Ovary (tissue), 10 donors: ENCODE measurements at regions of chr9 and their contacts with region 1.

Region 1: DNA sequence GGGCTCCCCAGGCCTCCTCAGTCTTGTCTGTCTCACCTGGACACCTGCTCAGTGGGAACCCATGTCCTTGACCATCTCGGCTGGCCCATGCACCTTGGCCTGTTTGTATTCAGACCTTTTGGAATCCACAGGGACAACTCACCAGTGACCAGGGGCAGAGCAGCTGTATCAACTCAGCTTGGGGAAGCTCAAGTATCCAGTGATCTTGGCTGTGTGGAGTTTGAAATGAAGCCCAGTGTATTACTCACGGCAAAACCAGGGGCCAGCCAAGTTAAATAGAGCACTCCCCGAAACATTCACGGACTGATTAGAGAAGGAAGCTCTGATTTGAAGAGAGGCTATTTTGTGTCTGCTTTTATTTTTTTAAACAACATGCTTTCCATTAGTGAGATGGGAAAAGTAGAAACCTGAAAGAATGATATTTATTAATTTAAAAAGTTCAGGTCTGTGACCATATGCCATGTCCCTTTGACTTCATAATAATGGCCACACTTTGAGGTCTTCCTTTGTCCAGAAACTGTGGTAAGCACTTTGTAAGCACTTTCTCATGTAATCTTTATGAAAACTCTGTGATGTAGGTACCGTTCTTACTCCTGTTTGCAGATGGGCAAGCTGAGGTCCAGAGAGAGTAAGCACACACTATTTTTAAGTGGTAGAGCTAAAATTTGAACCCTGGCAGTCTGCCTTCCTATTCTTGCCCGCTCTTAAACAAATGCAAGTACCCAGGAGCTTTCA is 656.5 kb downstream of the BNC2 start:
- DNase-seq: peak; percentile 77 to 90 (median 78)
- H3K4me3 ChIP-seq: no peak overlapping the region
- H3K27ac ChIP-seq: peak overlapping the region; percentile 42 to 71
- H3K4me1 ChIP-seq: peaks cover 17% of the 10 kb centered on the region
- H3K27me3 ChIP-seq: no peaks in the 10 kb centered on the region
- CTCF ChIP-seq: no peak
- EP300 ChIP-seq: no peak
- POLR2A ChIP-seq: no peak

Region 2: GRCh38 chr9:15961217-15961616 is 252.7 kb before region 1 on chr9:
- intact Hi-C with region 1: no loop called
- DNase-seq: no peak
- H3K4me3 ChIP-seq: no peak overlapping the region
- H3K27ac ChIP-seq: no peak overlapping the region
- H3K4me1 ChIP-seq: no peaks in the 10 kb centered on the region
- H3K27me3 ChIP-seq: no peaks in the 10 kb centered on the region
- CTCF ChIP-seq: no peak
- EP300 ChIP-seq: no peak
- POLR2A ChIP-seq: no peak

Region 3: DNA sequence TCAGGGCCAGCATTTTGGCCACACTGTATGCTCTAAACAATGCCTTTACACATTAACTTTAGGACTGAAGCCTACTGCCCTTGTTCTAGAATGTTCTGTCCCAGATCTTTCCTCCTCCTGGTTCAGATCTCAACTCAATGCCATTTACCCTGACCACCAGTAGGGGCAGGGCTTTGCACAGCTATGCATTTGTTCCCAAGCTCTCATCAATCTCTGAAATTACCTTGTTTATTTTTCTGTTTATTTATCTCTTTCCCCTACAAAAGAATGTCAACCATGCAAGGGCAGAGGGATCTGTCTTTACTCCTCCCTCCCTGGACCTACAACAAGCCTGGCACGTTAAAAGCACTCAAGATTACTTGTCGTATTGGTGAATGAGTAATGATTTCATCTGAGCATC is 43.7 kb after region 1 on chr9:
- intact Hi-C with region 1: loop called in 2 of 4 experiments (anchors 5 kb)
- DNase-seq: no peak
- H3K4me3 ChIP-seq: no peak overlapping the region
- H3K27ac ChIP-seq: peak overlapping the region in 1 of 2 donors; percentile 17
- H3K4me1 ChIP-seq: peaks cover 15% of the 10 kb centered on the region
- H3K27me3 ChIP-seq: no peaks in the 10 kb centered on the region
- CTCF ChIP-seq: peak in 2 of 3 donors; percentile 19 to 24
- EP300 ChIP-seq: no peak
- POLR2A ChIP-seq: no peak

Region 4: DNA sequence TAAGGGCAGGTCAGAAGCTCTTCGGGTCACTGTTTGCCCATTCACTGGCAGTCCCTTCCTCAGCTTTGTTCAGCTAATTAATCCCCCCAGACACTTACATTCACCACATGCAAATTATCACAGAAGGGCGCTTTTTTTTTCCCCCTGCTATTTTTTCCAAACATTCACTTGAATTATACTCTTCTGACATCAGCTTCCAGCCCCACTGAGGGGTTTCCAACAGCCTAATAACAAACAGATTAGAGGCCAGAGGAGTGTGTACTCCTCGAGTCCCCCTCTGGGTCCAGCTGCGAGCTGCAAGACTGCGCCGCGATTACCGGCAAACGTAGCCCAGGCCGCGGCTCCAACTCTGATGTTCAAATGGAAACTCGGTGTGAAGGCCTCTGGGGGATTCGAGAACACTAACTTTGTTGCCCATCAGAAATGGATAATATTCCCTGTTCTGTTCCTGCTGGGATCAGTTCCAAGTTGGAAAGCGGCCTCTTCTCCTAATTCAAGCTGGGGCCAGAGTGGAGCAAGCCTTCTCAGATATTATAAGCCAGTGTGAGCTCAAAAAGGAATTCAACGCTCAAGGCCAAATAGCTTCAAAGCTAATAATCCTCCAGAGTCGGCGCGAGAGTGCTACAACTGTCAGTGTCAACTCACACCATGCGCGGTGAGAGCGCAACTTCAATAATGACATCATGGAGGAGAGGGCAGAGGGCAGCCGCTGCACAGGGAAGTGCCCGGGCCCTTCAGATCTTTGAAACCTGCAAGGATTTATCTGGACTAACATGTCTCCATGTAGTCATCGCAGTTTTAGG is 95.7 kb after region 1 on chr9:
- intact Hi-C with region 1: loop called in 3 of 4 experiments (anchors 5 to 10 kb)
- DNase-seq: peak; percentile 83 to 93 (median 91)
- H3K4me3 ChIP-seq: no peak overlapping the region
- H3K27ac ChIP-seq: peak overlapping the region; percentile 74 to 91
- H3K4me1 ChIP-seq: peaks cover 22% of the 10 kb centered on the region
- H3K27me3 ChIP-seq: no peaks in the 10 kb centered on the region
- CTCF ChIP-seq: peak in 1 of 3 donors; percentile 23
- EP300 ChIP-seq: no peak
- POLR2A ChIP-seq: no peak

Region 5: DNA sequence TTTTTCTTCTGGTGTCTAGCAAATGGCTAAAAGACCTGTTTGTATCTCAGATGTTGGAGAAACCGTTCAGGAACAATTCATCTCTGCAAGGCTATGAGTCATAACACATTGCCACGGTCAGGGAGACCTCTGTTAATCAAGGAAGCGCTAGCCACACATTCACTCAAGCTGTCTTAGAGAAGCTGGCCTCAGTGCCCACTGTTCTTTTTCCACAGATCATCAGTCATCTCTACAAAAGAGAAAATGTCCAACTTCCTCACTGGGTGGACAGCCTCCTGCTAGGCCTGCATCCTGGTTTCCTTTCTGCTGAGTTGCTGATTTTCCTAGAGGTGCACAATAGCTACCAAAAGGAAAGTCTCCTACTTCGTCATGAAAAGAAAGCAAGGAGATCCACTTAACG is 296.0 kb after region 1 on chr9:
- intact Hi-C with region 1: no loop called
- DNase-seq: no peak
- H3K4me3 ChIP-seq: no peak overlapping the region
- H3K27ac ChIP-seq: peak overlapping the region in 1 of 2 donors; percentile 28
- H3K4me1 ChIP-seq: peaks cover 15% of the 10 kb centered on the region
- H3K27me3 ChIP-seq: no peaks in the 10 kb centered on the region
- CTCF ChIP-seq: no peak
- EP300 ChIP-seq: no peak
- POLR2A ChIP-seq: no peak